Pancreas (tissue), 10 donors: ENCODE measurements at regions of chr1 and their contacts with region 1.

Region 1: DNA sequence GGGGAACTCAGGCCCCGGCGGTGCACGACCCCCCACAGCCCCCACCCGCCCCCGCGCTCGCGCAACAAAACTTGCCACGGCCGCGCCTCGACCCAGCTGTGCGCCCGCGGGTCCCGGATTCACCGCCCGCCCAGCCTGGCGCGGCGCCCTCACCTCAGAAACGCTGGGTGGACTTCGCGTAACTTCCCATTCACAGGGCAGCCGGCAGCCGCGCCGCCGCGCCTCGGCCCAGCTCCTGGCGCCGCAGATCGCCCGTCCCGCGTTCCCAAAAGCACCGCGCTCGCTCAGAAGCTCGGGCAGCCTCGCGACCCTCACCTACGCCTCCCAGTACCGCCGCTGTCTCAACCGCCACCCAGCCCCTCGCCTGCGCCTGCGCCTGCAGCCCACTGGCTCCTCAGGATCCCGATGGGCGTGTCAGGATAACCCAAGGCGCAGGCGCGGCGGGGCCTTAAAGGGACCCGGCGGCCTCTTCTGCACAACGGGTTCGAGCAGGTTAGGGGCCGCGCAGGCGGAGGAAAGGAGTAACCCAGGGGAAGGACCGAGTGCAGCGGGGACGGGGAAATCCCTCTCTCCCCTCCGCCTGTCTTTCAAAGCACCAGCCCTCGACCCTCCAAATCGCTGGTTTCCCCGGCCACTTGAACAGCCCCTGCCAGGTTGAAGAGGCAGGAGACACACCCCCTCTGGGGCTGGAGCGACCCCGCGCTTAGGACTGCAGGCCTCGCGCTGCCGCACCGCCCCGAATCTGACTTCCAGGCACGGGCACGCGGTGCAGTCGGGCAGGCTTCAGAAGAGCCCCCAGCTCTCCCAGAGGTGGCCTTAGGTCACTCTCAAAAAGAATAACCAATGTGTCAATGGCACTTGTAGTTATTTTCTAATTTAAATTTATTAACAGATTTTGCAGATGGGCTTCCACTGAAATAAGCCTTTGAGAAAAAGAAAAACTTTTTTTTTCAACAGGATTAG is at the start of gene NBPF1:
- DNase-seq: peak; percentile 93 to 100 (median 98)
- ATAC-seq: peak; percentile 97 to 99 (median 98)
- H3K4me3 ChIP-seq: peak within 1 kb of the TSS; percentile 63 to 78 (median 68)
- H3K27ac ChIP-seq: peak within 1 kb of the TSS; percentile 1 to 70 (median 35)
- H3K4me1 ChIP-seq: peaks cover 9 to 23% (median 18%) of the 10 kb centered on the region in 3 donors
- H3K27me3 ChIP-seq: no peaks in the 10 kb centered on the region
- CTCF ChIP-seq: no peak
- total RNA-seq, gene NBPF1: 12.4 to 32.2 (median 14.3) TPM

Region 2: DNA sequence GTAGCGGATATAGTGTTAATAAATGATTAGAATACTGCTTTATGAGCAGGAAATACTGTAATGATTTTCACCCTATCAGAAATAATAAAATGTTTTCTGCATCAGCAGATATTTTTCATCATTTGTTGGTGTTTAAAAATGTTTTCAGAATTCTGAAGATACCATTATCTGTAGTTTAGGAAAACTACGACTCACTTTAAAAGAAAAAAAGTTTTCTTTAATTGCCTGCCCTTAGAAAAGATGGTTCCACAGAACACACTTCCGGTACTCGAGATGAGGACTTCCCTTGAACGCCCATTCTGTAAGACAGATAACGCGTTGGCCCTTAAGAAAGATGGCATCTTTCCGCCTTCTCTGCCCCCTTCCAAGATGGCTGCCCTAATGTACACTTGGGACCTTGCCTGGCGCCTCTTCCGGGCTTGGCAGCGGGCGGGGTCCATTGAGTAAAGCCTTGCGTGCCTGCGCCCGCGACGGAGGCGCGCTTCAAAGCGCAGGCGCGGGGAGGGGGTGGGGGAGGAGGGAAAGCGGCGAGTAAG is 246.7 kb before region 1 on chr1 and contains the start of gene SZRD1:
- intact Hi-C with region 1: no loop called
- DNase-seq: peak; percentile 93 to 98 (median 96)
- ATAC-seq: peak; percentile 89 to 94 (median 90)
- H3K4me3 ChIP-seq: peak within 1 kb of the TSS; percentile 71 to 93 (median 88)
- H3K27ac ChIP-seq: peak within 1 kb of the TSS; percentile 78 to 98 (median 92)
- H3K4me1 ChIP-seq: peaks cover 3 to 27% (median 15%) of the 10 kb centered on the region in 3 donors
- H3K27me3 ChIP-seq: no peaks in the 10 kb centered on the region
- CTCF ChIP-seq: no peak
- total RNA-seq, gene SZRD1: 24.9 to 53.5 (median 37.0) TPM

Region 3: DNA sequence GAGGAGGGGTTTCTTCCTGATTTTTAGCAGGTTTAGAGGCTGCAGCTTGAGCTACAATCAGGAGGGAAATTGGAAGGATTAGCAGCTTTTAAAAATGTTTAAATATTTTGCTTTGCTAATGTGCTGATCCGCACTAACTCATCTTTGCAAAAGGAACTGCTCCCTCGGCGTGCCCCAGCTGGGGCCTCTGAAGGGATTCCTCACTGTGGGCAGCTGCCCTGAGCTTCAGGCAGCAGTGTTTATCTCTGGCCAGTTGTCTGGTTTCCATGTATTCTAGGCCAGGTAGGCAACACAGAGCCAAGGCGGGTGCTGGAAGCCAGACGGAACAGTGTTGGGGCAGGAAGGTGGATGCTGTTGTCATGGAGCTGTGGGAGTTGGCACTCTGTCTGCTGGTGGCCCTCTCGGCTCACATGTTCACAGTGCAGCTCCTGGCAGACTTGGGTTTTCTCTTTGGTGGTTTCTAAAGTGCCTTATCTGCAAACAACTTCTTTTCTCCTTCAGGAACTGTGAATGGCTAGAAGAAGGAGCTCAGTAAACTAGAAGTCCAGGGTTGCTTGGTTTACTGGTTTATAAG is 154.0 kb before region 1 on chr1:
- intact Hi-C with region 1: no loop called
- DNase-seq: no peak
- ATAC-seq: no peak
- H3K4me3 ChIP-seq: no peak overlapping the region
- H3K27ac ChIP-seq: no peak overlapping the region
- H3K4me1 ChIP-seq: no peaks in the 10 kb centered on the region
- H3K27me3 ChIP-seq: no peaks in the 10 kb centered on the region
- CTCF ChIP-seq: no peak

Region 4: GRCh38 chr1:16921391-16922185 is 308.1 kb after region 1 on chr1 and contains the start of gene CROCC:
- intact Hi-C with region 1: no loop called
- DNase-seq: peak in 5 of 6 donors; percentile 69 to 88 (median 82)
- ATAC-seq: peak; percentile 74 to 81 (median 78)
- H3K4me3 ChIP-seq: no peak within 1 kb of the TSS
- H3K27ac ChIP-seq: peak within 1 kb of the TSS in 1 of 4 donors; percentile 64
- H3K4me1 ChIP-seq: peaks cover 4 to 11% (median 8%) of the 10 kb centered on the region in 3 donors
- H3K27me3 ChIP-seq: no peaks in the 10 kb centered on the region
- CTCF ChIP-seq: no peak
- total RNA-seq, gene CROCC: 8.1 to 18.3 (median 13.6) TPM

Region 5: DNA sequence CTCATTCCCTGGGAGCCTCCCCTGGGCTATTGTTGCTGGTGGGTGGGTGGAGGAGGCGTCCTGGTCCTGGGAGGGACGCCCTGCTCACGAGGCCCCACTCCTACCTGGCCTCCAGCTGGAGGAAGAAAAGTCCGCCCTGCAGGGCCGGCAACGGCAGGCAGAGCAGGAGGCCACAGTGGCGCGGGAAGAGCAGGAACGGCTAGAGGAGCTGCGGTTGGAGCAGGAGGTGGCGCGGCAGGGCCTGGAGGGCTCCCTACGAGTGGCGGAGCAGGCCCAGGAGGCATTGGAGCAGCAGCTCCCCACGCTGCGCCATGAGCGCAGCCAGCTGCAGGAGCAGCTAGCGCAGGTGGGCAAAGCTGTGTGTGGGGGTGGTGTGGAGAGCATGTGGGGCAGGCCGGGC is 333.2 kb after region 1 on chr1:
- intact Hi-C with region 1: loop called in 1 of 3 experiments (anchors 10 kb)
- DNase-seq: peak in 2 of 6 donors; percentile 45 to 74
- ATAC-seq: no peak
- H3K4me3 ChIP-seq: no peak overlapping the region
- H3K27ac ChIP-seq: no peak overlapping the region
- H3K4me1 ChIP-seq: peaks cover 0 to 15% (median 5%) of the 10 kb centered on the region in 3 donors
- H3K27me3 ChIP-seq: no peaks in the 10 kb centered on the region
- CTCF ChIP-seq: no peak